Breast epithelium (tissue), 4 donors: ENCODE measurements at regions of chr10 and their contacts with region 1.

Region 1: GRCh38 chr10:85262992-85263391 is 934.6 kb downstream of the CCSER2 start:
- DNase-seq: no peak
- H3K4me3 ChIP-seq: no peak overlapping the region
- H3K27ac ChIP-seq: no peak overlapping the region
- H3K4me1 ChIP-seq: no peaks in the 10 kb centered on the region
- H3K27me3 ChIP-seq: no peaks in the 10 kb centered on the region
- CTCF ChIP-seq: no peak
- POLR2A ChIP-seq: no peak

Region 2: GRCh38 chr10:83685458-83685857 is 1577.5 kb before region 1 on chr10:
- intact Hi-C with region 1: no loop called
- DNase-seq: peak in 1 of 2 donors; percentile 17
- H3K4me3 ChIP-seq: no peak overlapping the region
- H3K27ac ChIP-seq: peak overlapping the region in 1 of 2 donors; percentile 19
- H3K4me1 ChIP-seq: no peaks in the 10 kb centered on the region
- H3K27me3 ChIP-seq: no peaks in the 10 kb centered on the region
- CTCF ChIP-seq: no peak
- POLR2A ChIP-seq: no peak

Region 3: DNA sequence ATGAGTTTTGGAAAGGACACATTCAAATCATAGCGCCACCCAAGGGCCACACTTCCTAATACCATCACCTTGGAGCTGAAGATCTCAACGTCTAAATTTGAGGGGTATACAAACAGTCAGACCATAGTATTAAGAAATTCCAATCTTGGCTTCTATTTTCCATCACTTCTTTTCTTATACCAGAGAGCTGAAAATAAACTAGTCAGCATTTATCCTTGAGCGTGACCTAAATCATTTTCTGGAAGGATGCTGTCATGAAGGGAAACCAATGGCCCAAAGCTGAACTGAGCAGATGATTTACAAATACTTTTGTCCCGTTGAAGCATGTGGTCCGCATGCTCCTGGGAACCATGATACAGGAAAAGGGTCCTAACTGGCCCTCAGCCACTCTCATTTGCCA is 12.7 kb before region 1 on chr10:
- intact Hi-C with region 1: no loop called
- DNase-seq: no peak
- H3K4me3 ChIP-seq: no peak overlapping the region
- H3K27ac ChIP-seq: no peak overlapping the region
- H3K4me1 ChIP-seq: no peaks in the 10 kb centered on the region
- H3K27me3 ChIP-seq: no peaks in the 10 kb centered on the region
- CTCF ChIP-seq: no peak
- POLR2A ChIP-seq: no peak

Region 4: DNA sequence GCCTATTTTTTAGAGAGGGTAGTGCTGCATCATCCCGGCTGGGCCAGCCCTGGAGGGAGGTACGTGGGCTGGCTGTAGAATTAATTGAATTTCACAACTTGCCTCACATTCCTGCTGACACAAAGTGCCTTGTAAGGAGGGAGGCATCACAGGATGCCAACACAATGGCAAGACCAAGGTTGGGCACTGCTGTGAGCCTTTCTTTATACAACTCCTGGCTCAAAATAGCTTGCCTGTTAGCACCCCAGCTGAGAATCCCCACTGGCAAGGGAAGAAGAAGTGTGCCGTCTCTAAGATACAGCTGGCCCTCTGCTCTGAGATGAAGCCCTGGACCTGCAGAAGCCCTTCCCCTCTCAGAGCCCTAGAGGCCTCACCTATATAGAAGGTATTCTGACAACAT is 229.7 kb after region 1 on chr10:
- intact Hi-C with region 1: no loop called
- DNase-seq: peak in 1 of 2 donors; percentile 49
- H3K4me3 ChIP-seq: no peak overlapping the region
- H3K27ac ChIP-seq: peak overlapping the region; percentile 50 to 68
- H3K4me1 ChIP-seq: no peaks in the 10 kb centered on the region
- H3K27me3 ChIP-seq: no peaks in the 10 kb centered on the region
- CTCF ChIP-seq: no peak
- POLR2A ChIP-seq: no peak

Region 5: DNA sequence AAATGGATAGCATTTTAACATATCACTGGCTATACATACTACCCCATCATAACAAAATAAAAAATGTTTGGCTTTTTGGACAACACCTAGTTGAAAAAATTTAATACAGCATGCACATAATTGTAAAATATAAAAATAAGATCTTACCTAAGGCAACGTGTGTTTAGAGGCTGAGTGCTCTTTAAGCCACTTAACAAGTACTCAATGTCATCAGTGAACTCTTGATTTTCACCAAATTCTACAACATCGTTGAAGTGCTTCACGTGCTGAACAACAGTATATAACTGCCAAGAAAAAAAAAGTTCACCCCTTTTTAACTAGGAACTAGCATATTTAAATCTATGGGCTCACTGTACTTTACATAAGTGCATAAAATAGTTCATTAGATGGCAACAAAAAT is 1209.1 kb after region 1 on chr10:
- intact Hi-C with region 1: loop called (anchors 10 kb)
- DNase-seq: no peak
- H3K4me3 ChIP-seq: no peak overlapping the region
- H3K27ac ChIP-seq: no peak overlapping the region
- H3K4me1 ChIP-seq: no peaks in the 10 kb centered on the region
- H3K27me3 ChIP-seq: no peaks in the 10 kb centered on the region
- CTCF ChIP-seq: no peak
- POLR2A ChIP-seq: no peak